ENCODE measurements at regions of chr2 and their contacts with region 1.

Region 1: GRCh38 chr2:36530983-36531354 is 67.0 kb downstream of the FEZ2 start:
- DNase-seq: no peak
- H3K4me3 ChIP-seq: no peak overlapping the region
- CTCF ChIP-seq: no peak

Region 2: GRCh38 chr2:36044411-36044810 is 486.6 kb before region 1 on chr2:
- CTCF ChIA-PET with region 1: no interaction called
- POLR2A ChIA-PET with region 1: no interaction called
- DNase-seq: no peak
- H3K4me3 ChIP-seq: no peak overlapping the region
- CTCF ChIP-seq: no peak

Region 3: DNA sequence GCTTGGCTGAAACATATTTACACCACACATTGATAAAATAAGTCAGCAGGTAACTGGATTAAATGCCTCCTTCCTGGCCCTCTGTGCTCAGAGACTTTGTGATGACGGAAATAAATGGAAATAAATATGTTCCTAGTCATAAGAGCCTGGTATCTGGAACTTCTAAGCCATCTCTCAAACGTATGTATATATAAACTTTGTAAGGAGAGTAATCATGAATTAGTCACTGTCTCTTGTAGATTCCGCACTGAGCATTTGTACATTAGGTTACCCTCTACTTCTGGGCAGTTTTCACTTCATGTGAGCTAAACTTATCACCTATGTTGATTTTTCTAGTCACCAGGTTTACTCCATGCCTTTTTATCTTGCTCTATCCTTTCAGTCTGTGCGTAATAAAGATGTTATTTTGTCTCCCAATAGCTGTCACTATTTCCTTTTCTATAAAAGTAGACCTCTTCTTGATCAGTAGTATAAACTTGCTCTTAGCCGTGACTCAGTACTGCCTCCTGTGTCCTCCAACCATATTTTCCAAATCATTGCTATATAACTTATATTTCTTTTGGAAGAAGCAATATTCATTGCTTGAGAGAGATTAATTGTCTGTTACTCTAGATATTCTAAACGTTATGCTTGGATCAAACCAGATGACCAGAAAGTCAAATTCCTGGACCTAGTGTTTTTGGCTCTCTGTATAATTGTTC is 13.8 kb after region 1 on chr2:
- CTCF ChIA-PET with region 1: interaction called, 11 read pairs
- POLR2A ChIA-PET with region 1: no interaction called
- DNase-seq: no peak
- H3K4me3 ChIP-seq: no peak overlapping the region
- CTCF ChIP-seq: peak; percentile 10

Region 4: GRCh38 chr2:36756438-36756837 is 225.5 kb after region 1 on chr2:
- CTCF ChIA-PET with region 1: no interaction called
- POLR2A ChIA-PET with region 1: no interaction called
- DNase-seq: no peak
- H3K4me3 ChIP-seq: no peak overlapping the region
- CTCF ChIP-seq: no peak